ENCODE measurements at regions of chr17 and their contacts with region 1.

Region 1: GRCh38 chr17:60036796-60037612 is 41.7 kb downstream of the HEATR6 start:
- DNase-seq: peak; percentile 45 to 71 (median 65)
- ATAC-seq: peak; percentile 96
- H3K4me3 ChIP-seq: no peak overlapping the region
- H3K4me3 Mint-ChIP-seq: peak overlapping the region in 1 of 10 donors; percentile 5
- H3K27ac ChIP-seq: no peak overlapping the region
- H3K27ac Mint-ChIP-seq: no peak overlapping the region
- H3K4me1 ChIP-seq: peaks cover 0 to 4% of the 10 kb centered on the region in 2 donors
- H3K4me1 Mint-ChIP-seq: peaks cover 0 to 8% (median 5%) of the 10 kb centered on the region in 7 donors
- H3K27me3 ChIP-seq: no peaks in the 10 kb centered on the region
- H3K27me3 Mint-ChIP-seq: peaks cover 16 to 24% (median 19%) of the 10 kb centered on the region in 5 donors

Region 2: GRCh38 chr17:59521204-59522126 is 515.5 kb before region 1 on chr17:
- CTCF ChIA-PET with region 1: no interaction called
- POLR2A ChIA-PET with region 1: no interaction called
- intact Hi-C with region 1: loop called (anchors 10 kb)
- DNase-seq: peak; percentile 17 to 69 (median 38)
- ATAC-seq: peak; percentile 85
- H3K4me3 ChIP-seq: no peak overlapping the region
- H3K4me3 Mint-ChIP-seq: no peak overlapping the region
- H3K27ac ChIP-seq: no peak overlapping the region
- H3K27ac Mint-ChIP-seq: no peak overlapping the region
- H3K4me1 ChIP-seq: no peaks in the 10 kb centered on the region
- H3K4me1 Mint-ChIP-seq: peaks cover 0 to 6% (median 5%) of the 10 kb centered on the region in 7 donors
- H3K27me3 ChIP-seq: peaks cover 0 to 3% of the 10 kb centered on the region in 2 donors
- H3K27me3 Mint-ChIP-seq: peaks cover 4 to 22% (median 10%) of the 10 kb centered on the region in 5 donors

Region 3: GRCh38 chr17:59746849-59747445 is 290.1 kb before region 1 on chr17:
- CTCF ChIA-PET with region 1: interaction called, 3 read pairs
- POLR2A ChIA-PET with region 1: no interaction called
- intact Hi-C with region 1: loop called (anchors 5 kb)
- DNase-seq: peak in 5 of 9 donors; percentile 9 to 38 (median 15)
- ATAC-seq: peak; percentile 53
- H3K4me3 ChIP-seq: no peak overlapping the region
- H3K4me3 Mint-ChIP-seq: no peak overlapping the region
- H3K27ac ChIP-seq: no peak overlapping the region
- H3K27ac Mint-ChIP-seq: peak overlapping the region in 3 of 9 donors; percentile 18 to 65 (median 25)
- H3K4me1 ChIP-seq: no peaks in the 10 kb centered on the region
- H3K4me1 Mint-ChIP-seq: peaks cover 0 to 20% (median 0%) of the 10 kb centered on the region in 7 donors
- H3K27me3 ChIP-seq: no peaks in the 10 kb centered on the region
- H3K27me3 Mint-ChIP-seq: no peaks in the 10 kb centered on the region

Region 4: DNA sequence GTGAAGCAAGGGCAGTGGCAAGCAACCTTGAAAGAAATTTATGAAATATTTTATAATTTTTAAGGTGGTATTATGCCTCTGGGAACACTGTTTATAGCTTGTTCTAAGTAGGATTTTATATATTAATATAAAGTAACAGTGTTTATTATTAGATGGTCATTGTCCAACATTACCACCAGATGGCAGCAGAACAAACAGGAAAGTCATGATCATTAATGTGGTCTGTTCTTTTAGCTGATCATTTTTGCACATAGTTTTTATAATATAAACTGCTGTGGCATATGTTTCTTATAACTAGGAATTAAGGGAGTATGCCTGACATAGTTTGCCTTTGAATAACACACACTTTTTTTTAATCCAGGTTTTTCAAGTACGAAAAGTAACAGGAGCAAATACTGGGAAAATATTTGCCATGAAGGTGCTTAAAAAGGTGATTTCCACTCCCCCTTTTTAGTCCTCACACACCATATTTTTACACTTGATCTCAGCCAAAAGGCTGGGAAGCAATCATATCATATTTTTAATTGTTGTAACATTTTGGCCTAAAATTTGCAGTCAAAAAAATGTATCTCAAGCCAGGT is 122.6 kb before region 1 on chr17:
- CTCF ChIA-PET with region 1: no interaction called
- POLR2A ChIA-PET with region 1: no interaction called
- intact Hi-C with region 1: loop called (anchors 5 kb)
- DNase-seq: peak in 7 of 9 donors; percentile 12 to 55 (median 44)
- ATAC-seq: peak; percentile 79
- H3K4me3 ChIP-seq: no peak overlapping the region
- H3K4me3 Mint-ChIP-seq: no peak overlapping the region
- H3K27ac ChIP-seq: no peak overlapping the region
- H3K27ac Mint-ChIP-seq: no peak overlapping the region
- H3K4me1 ChIP-seq: no peaks in the 10 kb centered on the region
- H3K4me1 Mint-ChIP-seq: peaks cover 0 to 6% (median 3%) of the 10 kb centered on the region in 7 donors
- H3K27me3 ChIP-seq: no peaks in the 10 kb centered on the region
- H3K27me3 Mint-ChIP-seq: no peaks in the 10 kb centered on the region

Measured in naive thymus-derived CD4-positive, alpha-beta T cell (primary cell).